ENCODE measurements at regions of chr11 and their contacts with region 1.

Region 1: DNA sequence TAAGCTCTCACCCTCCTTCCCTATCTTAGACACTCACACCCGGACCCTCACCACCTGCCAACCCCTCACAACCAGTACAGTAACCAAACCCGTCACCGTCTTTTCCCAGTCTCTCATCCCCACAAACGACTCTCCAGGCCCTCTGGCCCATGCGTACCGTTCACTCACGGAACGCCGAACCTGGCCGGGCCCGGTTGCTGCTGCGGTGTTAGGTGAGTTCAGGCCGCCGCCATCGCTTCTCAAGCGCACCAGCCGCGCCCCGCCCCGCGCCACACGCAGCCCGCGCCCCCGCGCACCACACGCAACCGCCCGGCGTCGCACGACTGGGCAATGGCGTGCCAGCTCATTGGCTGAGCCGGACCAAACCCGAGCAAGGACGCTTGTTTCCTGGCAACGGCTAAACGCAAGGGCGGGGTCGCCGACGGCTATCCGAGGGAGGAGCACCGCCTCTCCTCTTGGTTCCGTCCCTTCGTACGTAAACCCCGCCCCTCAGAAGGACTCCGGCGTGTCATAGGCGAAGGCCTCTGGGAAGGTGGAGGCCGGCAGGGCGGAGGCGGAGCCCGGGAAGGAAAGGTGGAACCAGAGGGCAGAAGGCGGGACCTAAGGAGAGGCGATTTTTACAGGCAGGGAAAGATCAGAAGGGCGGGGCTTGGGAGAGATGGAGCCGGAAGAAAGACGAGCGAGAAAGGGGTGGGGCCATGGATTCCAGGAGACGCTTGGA is at the start of gene FHIP1B:
- DNase-seq: peak; percentile 100
- H3K4me3 ChIP-seq: peak within 1 kb of the TSS; percentile 89
- H3K4me3 Mint-ChIP-seq: peak within 1 kb of the TSS; percentile 87
- H3K27ac Mint-ChIP-seq: peak within 1 kb of the TSS; percentile 90
- H3K4me1 ChIP-seq: peaks cover 19% of the 10 kb centered on the region
- H3K4me1 Mint-ChIP-seq: peaks cover 19% of the 10 kb centered on the region
- H3K27me3 ChIP-seq: no peaks in the 10 kb centered on the region
- H3K27me3 Mint-ChIP-seq: no peaks in the 10 kb centered on the region
- CTCF ChIP-seq: no peak
- total RNA-seq, gene FHIP1B: 26.8 and 27.8 TPM in 2 replicates

Region 2: DNA sequence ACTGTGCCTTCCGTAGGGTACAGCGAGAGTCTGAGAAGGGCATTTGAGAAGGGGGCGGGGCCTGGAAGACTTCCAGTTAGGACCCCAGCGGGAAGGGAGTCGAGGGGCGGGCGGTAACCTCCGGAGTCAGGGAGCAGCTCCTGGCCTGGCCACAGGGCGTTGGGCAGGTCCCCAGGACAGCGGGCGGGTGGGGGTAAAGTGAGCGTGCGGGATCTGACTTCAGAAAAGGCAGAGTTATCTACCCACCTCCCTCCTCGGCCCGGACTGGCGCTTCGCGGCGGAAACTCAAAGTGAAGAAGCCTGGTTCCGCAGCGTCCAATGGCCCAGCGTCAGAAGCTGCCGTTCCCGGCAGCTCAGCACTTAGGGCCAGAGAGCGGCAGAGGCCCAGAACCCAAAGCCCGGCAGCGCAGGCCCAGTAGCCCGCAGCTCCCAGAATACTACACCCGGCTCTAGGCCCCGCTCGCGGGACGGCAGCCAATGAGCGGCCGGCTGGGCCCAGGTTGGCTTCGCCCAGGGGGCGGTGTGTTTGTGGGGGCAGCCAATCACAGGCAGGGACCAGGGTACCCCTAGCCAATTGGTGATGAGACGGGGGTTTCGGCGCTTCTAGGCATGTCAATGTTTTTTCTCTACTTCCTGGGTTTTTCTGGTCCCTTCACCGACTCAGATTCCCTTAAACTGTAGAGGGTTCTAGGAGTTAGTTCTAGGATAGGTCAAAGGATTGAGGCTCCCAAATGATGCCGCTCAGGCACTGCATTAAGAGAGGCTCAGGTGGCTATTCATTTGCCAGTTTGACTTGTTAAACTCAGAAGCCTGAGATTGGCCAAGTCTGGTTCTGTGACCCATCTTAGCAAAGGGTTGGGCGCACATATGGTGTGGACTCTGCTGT is 1626.5 kb before region 1 on chr11 and contains the start of gene TRIM68:
- CTCF ChIA-PET with region 1: no interaction called
- POLR2A ChIA-PET with region 1: no interaction called
- intact Hi-C with region 1: loop called (anchors 5 kb)
- DNase-seq: peak; percentile 97 to 98
- H3K4me3 ChIP-seq: peak within 1 kb of the TSS; percentile 50
- H3K4me3 Mint-ChIP-seq: peak within 1 kb of the TSS; percentile 87
- H3K27ac Mint-ChIP-seq: peak within 1 kb of the TSS; percentile 88
- H3K4me1 ChIP-seq: 0 out of 2 replicates have a peak, but pooled peaks cover 13% of the 10 kb centered on the region
- H3K4me1 Mint-ChIP-seq: peaks cover 10% of the 10 kb centered on the region
- H3K27me3 ChIP-seq: no peaks in the 10 kb centered on the region
- H3K27me3 Mint-ChIP-seq: no peaks in the 10 kb centered on the region
- CTCF ChIP-seq: no peak
- total RNA-seq, gene TRIM68: 4.9 and 6.9 TPM in 2 replicates

Region 3: DNA sequence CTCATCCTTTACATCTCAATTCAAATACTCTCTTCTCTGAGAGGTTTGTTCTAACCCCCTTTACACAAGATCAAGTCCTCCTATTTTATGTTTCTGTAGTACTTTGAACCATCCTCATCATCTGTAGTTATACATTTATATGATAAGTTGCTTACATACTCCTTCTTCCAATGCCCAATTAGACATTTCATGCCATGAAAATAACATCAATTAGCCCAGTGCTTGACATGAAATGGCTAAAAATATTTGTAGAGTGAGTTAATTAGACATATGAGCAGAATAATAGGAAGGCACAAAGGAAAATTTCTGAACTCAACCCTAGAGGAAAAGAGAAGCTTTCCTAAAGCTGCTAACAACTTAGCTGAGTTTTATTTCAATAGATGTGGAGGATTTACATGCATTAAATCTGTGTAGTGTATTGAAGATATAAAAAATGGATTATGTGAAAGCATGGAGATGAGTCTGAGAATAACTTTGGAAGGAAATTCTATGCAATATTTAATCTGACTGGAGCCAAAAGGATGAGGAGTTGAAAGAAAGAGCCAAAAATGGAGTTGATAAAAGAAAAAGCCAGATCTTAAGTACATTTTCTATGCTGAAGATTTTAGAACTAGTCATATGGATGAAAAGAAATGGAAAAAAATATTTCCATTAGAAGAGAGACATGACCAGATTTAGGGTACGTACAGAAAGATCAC is 203.7 kb before region 1 on chr11 and contains the start of gene OR56A1:
- CTCF ChIA-PET with region 1: no interaction called
- POLR2A ChIA-PET with region 1: no interaction called
- intact Hi-C with region 1: no loop called
- DNase-seq: no peak
- H3K4me3 ChIP-seq: no peak within 1 kb of the TSS
- H3K4me3 Mint-ChIP-seq: no peak within 1 kb of the TSS
- H3K27ac Mint-ChIP-seq: no peak within 1 kb of the TSS
- H3K4me1 ChIP-seq: no peaks in the 10 kb centered on the region
- H3K4me1 Mint-ChIP-seq: no peaks in the 10 kb centered on the region
- H3K27me3 ChIP-seq: 0 out of 2 replicates have a peak, but pooled peaks cover 2% of the 10 kb centered on the region
- H3K27me3 Mint-ChIP-seq: peaks cover 7% of the 10 kb centered on the region
- CTCF ChIP-seq: no peak
- total RNA-seq, gene OR56A1: not detected in 2 replicates

Region 4: GRCh38 chr11:6170226-6170625 is 64.3 kb before region 1 on chr11 and contains the start of gene OR52B2:
- CTCF ChIA-PET with region 1: no interaction called
- POLR2A ChIA-PET with region 1: no interaction called
- intact Hi-C with region 1: no loop called
- DNase-seq: no peak
- H3K4me3 ChIP-seq: no peak within 1 kb of the TSS
- H3K4me3 Mint-ChIP-seq: no peak within 1 kb of the TSS
- H3K27ac Mint-ChIP-seq: no peak within 1 kb of the TSS
- H3K4me1 ChIP-seq: no peaks in the 10 kb centered on the region
- H3K4me1 Mint-ChIP-seq: no peaks in the 10 kb centered on the region
- H3K27me3 ChIP-seq: no peaks in the 10 kb centered on the region; the same call in 1 of the 2 replicates
- H3K27me3 Mint-ChIP-seq: peaks cover 16% of the 10 kb centered on the region
- CTCF ChIP-seq: no peak
- total RNA-seq, gene OR52B2: not detected in 2 replicates

Region 5: GRCh38 chr11:6251120-6251733 is 16.7 kb after region 1 on chr11:
- CTCF ChIA-PET with region 1: interaction called, 13 read pairs
- POLR2A ChIA-PET with region 1: no interaction called
- intact Hi-C with region 1: loop called (anchors 1 kb)
- DNase-seq: peak; percentile 81 to 83
- H3K4me3 ChIP-seq: no peak overlapping the region
- H3K4me3 Mint-ChIP-seq: no peak overlapping the region
- H3K27ac Mint-ChIP-seq: no peak overlapping the region
- H3K4me1 ChIP-seq: peaks cover 15% of the 10 kb centered on the region
- H3K4me1 Mint-ChIP-seq: peaks cover 17% of the 10 kb centered on the region
- H3K27me3 ChIP-seq: no peaks in the 10 kb centered on the region
- H3K27me3 Mint-ChIP-seq: no peaks in the 10 kb centered on the region
- CTCF ChIP-seq: peak; percentile 69 to 91

Region 6: GRCh38 chr11:6298605-6299004 is 64.1 kb after region 1 on chr11:
- CTCF ChIA-PET with region 1: interaction called, 5 read pairs
- POLR2A ChIA-PET with region 1: no interaction called
- intact Hi-C with region 1: loop called (anchors 5 kb)
- DNase-seq: peak; percentile 72 to 76
- H3K4me3 ChIP-seq: no peak overlapping the region
- H3K4me3 Mint-ChIP-seq: no peak overlapping the region
- H3K27ac Mint-ChIP-seq: no peak overlapping the region
- H3K4me1 ChIP-seq: no peaks in the 10 kb centered on the region
- H3K4me1 Mint-ChIP-seq: no peaks in the 10 kb centered on the region
- H3K27me3 ChIP-seq: no peaks in the 10 kb centered on the region
- H3K27me3 Mint-ChIP-seq: no peaks in the 10 kb centered on the region
- CTCF ChIP-seq: peak; percentile 75 to 96

Region 7: GRCh38 chr11:6481012-6481923 is 246.7 kb after region 1 on chr11 and contains the starts of genes ARFIP2 and TIMM10B:
- CTCF ChIA-PET with region 1: no interaction called
- POLR2A ChIA-PET with region 1: no interaction called
- intact Hi-C with region 1: loop called (anchors 5 kb)
- DNase-seq: peak; percentile 97 to 98
- H3K4me3 ChIP-seq: peak within 1 kb of the TSS; percentile 88
- H3K4me3 Mint-ChIP-seq: peak within 1 kb of the TSS; percentile 97
- H3K27ac Mint-ChIP-seq: peak within 1 kb of the TSS; percentile 99
- H3K4me1 ChIP-seq: peaks cover 42% of the 10 kb centered on the region
- H3K4me1 Mint-ChIP-seq: peaks cover 23% of the 10 kb centered on the region
- H3K27me3 ChIP-seq: no peaks in the 10 kb centered on the region
- H3K27me3 Mint-ChIP-seq: no peaks in the 10 kb centered on the region
- CTCF ChIP-seq: no peak
- total RNA-seq, gene ARFIP2: 94.6 and 100 TPM in 2 replicates
- total RNA-seq, gene TIMM10B: 52.4 and 53.1 TPM in 2 replicates

Measured in Caco-2 (cell line).